CD14-positive monocyte (primary cell): ENCODE measurements at regions of chr17 and their contacts with region 1.

Region 1: DNA sequence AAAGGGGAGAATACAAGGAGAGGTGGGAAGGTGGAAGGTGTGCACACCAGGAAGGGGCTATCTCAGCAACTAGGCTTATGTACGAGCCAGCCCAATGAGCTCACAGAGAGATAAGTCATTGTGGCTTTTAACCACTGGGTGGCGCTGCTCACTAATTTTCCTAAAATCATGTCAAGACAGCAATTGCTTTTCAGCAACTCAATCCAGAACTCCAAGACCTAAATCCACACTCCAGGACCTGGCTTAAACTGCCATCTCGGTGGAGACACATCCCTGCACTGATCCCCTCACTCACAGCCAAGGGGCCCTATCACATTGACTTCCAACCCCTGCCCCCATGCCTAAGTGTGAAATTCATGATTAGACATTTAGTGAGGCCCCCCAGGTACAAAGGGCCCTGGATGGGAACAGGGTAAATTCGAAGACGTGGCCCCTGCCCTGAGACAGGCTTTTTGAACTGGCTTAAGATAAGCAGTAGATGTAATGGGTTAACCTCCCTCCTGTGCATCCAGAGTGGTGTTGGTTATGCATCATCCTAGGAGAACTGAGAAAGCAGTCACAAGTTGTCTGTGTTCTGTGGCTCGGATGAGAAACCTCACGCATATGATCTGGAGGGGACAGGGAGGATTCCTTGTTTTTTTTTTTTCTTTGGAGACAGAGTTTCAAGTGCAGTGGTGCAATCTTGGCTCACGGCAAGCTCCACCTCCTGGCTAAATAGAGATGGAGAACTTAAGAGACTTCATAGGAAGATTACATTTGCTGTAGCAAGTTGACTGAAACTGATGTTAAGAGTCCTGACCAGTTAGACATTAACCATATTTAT is 11.5 kb downstream of the CCL16 start:
- DNase-seq: peak; percentile 56 to 71 (median 70)
- H3K4me3 ChIP-seq: no peak overlapping the region
- H3K4me3 Mint-ChIP-seq: no peak overlapping the region
- H3K27ac ChIP-seq: no peak overlapping the region
- H3K27ac Mint-ChIP-seq: peak overlapping the region in 3 of 7 donors; percentile 32 to 46 (median 43)
- H3K4me1 ChIP-seq: no peaks in the 10 kb centered on the region
- H3K4me1 Mint-ChIP-seq: peaks cover 6% of the 10 kb centered on the region
- H3K27me3 ChIP-seq: no peaks in the 10 kb centered on the region
- H3K27me3 Mint-ChIP-seq: peaks cover 5 to 7% (median 6%) of the 10 kb centered on the region in 3 donors
- CTCF ChIP-seq: peak; percentile 92

Region 2: DNA sequence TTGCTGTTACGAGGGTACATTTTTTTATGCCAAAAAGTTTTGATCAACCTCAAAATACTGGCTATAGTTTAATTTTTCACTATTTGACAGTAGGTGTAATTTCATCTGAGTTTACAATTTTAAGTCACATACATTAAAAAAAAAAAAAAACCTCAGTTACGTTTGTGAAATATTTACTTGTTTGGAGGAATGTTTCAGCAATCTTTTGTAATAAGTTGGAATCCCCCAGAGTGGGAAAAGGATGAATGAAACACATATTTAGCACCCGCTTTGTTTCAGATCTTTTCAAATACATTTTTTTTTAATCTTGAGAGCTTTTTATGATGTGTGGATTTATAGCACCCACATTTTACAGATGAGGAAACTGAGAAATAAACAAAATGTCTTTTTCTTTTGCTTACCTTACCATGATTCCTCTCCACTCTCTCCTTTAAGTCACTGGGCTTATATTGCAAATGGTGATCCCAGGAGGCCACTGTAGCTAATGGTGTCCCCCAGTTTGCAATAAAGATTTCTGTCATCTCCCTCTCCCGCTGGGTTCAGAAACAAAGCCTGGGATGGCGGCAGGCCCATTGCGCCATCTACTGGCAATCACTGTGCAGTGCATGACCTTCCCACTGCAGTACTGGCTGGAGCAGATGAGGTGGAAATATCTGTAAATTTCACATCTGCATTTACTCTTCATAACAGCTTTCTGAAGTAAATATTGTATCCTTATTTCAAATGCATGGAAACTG is 179.0 kb after region 1 on chr17:
- intact Hi-C with region 1: loop called (anchors 2 to 5 kb)
- DNase-seq: peak; percentile 59 to 80 (median 74)
- H3K4me3 ChIP-seq: peak overlapping the region in 1 of 3 experiments; percentile 40
- H3K4me3 Mint-ChIP-seq: peak overlapping the region; percentile 17 to 63
- H3K27ac ChIP-seq: no peak overlapping the region
- H3K27ac Mint-ChIP-seq: no peak overlapping the region
- H3K4me1 ChIP-seq: peaks cover 8 to 10% of the 10 kb centered on the region in 2 donors
- H3K4me1 Mint-ChIP-seq: peaks cover 9% of the 10 kb centered on the region
- H3K27me3 ChIP-seq: no peaks in the 10 kb centered on the region
- H3K27me3 Mint-ChIP-seq: peaks cover 0 to 6% (median 2%) of the 10 kb centered on the region in 3 donors
- CTCF ChIP-seq: peak; percentile 99

Region 3: DNA sequence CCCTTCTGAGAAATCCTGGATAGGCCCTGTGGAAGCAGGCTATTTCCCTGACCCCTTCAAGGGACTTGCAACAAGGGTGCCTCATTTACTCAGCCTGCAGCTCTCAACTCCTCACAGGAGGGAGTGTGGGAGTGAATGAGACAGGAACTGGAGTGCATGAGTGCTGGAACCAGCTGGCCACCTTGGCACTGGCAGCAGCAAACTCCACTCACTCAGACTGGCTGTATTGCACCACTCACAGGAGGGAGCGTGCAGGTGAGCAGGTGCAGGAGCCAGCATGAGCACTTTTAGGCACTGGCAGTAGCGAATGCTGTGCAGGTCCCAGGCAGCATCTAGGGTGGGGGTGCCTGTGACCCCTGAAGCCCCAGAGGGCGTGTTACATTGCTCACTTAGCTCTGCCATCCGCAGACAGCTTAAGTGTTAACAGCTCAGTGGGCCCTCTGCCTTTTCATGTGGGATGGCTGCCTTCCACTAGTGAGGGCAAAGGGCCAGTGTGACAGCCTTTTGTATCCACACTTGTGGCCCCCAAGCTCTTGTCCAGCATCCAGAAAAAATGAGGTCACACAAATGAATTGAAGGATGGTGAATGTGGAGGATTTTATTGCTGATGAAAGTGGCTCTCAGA is 505.7 kb after region 1 on chr17:
- intact Hi-C with region 1: loop called (anchors 5 to 10 kb)
- DNase-seq: no peak
- H3K4me3 ChIP-seq: no peak overlapping the region
- H3K4me3 Mint-ChIP-seq: no peak overlapping the region
- H3K27ac ChIP-seq: no peak overlapping the region
- H3K27ac Mint-ChIP-seq: no peak overlapping the region
- H3K4me1 ChIP-seq: no peaks in the 10 kb centered on the region
- H3K4me1 Mint-ChIP-seq: no peaks in the 10 kb centered on the region
- H3K27me3 ChIP-seq: peaks cover 0 to 2% of the 10 kb centered on the region in 2 donors
- H3K27me3 Mint-ChIP-seq: peaks cover 20 to 38% (median 28%) of the 10 kb centered on the region in 3 donors
- CTCF ChIP-seq: no peak

Region 4: DNA sequence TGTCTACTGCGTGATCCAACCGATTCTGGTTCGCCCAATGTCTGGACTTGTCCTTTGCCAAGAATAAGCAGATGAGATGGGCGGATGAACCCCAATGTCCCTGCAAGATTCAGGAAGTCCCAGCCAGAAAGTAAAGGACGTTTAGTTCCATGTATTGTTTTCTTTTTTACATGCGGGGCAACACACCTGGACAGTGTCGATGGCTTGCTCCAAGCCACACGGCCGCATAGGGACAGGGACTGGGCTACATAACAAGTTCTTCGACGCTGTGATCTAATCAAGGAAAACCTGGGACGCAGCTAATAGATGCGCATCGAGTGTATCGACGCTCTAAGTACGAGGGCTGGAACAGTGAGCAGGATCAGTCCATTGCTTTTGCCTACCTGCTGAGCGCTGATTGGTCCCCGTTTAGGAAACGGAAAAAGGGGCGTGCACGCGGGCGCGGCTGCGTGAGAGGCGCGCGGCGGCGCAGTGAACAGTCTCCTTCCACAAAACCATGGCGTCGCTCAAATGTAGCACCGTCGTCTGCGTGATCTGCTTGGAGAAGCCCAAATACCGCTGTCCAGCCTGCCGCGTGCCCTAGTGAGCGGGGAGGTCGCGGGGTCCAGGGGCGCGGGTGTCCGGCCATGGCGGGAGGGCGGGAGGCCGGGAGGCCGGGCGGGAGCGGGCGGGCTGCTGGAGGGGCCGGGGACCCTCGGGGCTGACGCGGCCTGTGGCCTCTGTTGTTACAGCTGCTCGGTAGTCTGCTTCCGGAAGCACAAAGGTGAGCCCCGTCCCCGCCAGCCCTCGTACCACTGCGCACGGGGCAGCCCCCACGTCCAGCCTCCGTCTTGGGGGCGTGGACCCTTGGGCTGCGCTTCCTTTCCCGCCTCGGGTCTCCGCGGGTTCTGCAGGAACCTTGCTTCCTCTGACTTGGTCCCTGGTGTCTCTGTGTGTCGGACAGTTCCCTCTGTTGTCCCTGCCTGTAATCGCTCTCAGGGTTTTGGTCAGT is 516.7 kb after region 1 on chr17 and contains the start of gene ZNHIT3:
- intact Hi-C with region 1: loop called in 1 of 2 experiments (anchors 10 kb)
- DNase-seq: peak; percentile 80 to 86 (median 86)
- H3K4me3 ChIP-seq: peak within 1 kb of the TSS; percentile 83 to 86 (median 85)
- H3K4me3 Mint-ChIP-seq: peak within 1 kb of the TSS; percentile 98 to 99
- H3K27ac ChIP-seq: peak within 1 kb of the TSS; percentile 45 to 73
- H3K27ac Mint-ChIP-seq: peak within 1 kb of the TSS; percentile 71 to 95 (median 93)
- H3K4me1 ChIP-seq: peaks cover 24 to 32% of the 10 kb centered on the region in 2 donors
- H3K4me1 Mint-ChIP-seq: peaks cover 28% of the 10 kb centered on the region
- H3K27me3 ChIP-seq: peaks cover 6 to 15% of the 10 kb centered on the region in 2 donors
- H3K27me3 Mint-ChIP-seq: peaks cover 12 to 23% (median 14%) of the 10 kb centered on the region in 3 donors
- CTCF ChIP-seq: no peak
- polyA plus RNA-seq, gene ZNHIT3: 27.6 to 70.4 (median 63.5) TPM